ENCODE measurements at regions of chr14 and their contacts with region 1.

Region 1: GRCh38 chr14:102591889-102592763 is at the start of gene RCOR1:
- DNase-seq: peak; percentile 94 to 100 (median 99)

Region 2: GRCh38 chr14:102524466-102525218 is 67.5 kb before region 1 on chr14:
- intact Hi-C with region 1: loop called (anchors 2 kb)
- DNase-seq: peak; percentile 93 to 99 (median 98)

Region 3: DNA sequence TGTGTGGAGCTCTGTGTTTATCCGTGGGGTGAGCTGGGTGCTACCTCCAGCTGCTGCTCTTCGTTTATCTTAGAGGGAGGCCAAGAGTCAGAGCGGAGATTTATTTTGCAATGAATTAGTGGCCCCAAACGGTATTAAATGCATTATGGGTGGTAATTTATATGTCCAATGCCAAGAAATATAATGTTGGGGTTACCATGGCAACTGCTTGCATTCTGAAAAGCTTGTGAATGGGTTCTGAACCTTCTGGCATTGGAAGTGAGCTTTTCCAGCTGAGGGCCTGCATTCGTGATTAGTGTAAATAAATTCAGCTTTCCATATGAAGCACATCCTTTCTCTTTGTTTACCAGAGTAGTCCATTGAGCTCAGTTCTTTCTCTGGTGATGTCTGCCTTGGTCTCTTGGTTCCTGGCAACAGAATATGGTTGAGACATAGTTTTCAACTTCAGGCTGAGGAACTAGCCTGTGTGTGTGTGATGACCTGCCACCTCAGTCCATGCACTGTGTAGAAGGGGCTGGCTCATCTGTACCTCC is 237.0 kb after region 1 on chr14:
- intact Hi-C with region 1: no loop called
- DNase-seq: no peak